Aorta (tissue), 5 donors: ENCODE measurements at regions of chrX and their contacts with region 1.

Region 1: GRCh38 chrX:68828740-68829552 is at the start of gene EFNB1:
- DNase-seq: peak; percentile 94 to 95
- ATAC-seq: peak; percentile 93
- H3K4me3 ChIP-seq: peak within 1 kb of the TSS; percentile 56 to 63
- H3K27ac ChIP-seq: peak within 1 kb of the TSS in 1 of 2 donors; percentile 24
- H3K4me1 ChIP-seq: no peaks in the 10 kb centered on the region
- H3K27me3 ChIP-seq: no peaks in the 10 kb centered on the region
- total RNA-seq, gene EFNB1: 17.0 to 24.0 TPM

Region 2: GRCh38 chrX:68929332-68930150 is 100.6 kb after region 1 on chrX:
- intact Hi-C with region 1: loop called in 1 of 2 experiments (anchors 10 kb)
- DNase-seq: peak in 1 of 2 donors; percentile 62
- ATAC-seq: no peak
- H3K4me3 ChIP-seq: no peak overlapping the region
- H3K27ac ChIP-seq: no peak overlapping the region
- H3K4me1 ChIP-seq: no peaks in the 10 kb centered on the region
- H3K27me3 ChIP-seq: no peaks in the 10 kb centered on the region

Region 3: GRCh38 chrX:69060631-69061408 is 231.9 kb after region 1 on chrX:
- intact Hi-C with region 1: loop called (anchors 2 kb)
- DNase-seq: no peak
- ATAC-seq: peak; percentile 57
- H3K4me3 ChIP-seq: no peak overlapping the region
- H3K27ac ChIP-seq: no peak overlapping the region
- H3K4me1 ChIP-seq: no peaks in the 10 kb centered on the region
- H3K27me3 ChIP-seq: no peaks in the 10 kb centered on the region

Region 4: DNA sequence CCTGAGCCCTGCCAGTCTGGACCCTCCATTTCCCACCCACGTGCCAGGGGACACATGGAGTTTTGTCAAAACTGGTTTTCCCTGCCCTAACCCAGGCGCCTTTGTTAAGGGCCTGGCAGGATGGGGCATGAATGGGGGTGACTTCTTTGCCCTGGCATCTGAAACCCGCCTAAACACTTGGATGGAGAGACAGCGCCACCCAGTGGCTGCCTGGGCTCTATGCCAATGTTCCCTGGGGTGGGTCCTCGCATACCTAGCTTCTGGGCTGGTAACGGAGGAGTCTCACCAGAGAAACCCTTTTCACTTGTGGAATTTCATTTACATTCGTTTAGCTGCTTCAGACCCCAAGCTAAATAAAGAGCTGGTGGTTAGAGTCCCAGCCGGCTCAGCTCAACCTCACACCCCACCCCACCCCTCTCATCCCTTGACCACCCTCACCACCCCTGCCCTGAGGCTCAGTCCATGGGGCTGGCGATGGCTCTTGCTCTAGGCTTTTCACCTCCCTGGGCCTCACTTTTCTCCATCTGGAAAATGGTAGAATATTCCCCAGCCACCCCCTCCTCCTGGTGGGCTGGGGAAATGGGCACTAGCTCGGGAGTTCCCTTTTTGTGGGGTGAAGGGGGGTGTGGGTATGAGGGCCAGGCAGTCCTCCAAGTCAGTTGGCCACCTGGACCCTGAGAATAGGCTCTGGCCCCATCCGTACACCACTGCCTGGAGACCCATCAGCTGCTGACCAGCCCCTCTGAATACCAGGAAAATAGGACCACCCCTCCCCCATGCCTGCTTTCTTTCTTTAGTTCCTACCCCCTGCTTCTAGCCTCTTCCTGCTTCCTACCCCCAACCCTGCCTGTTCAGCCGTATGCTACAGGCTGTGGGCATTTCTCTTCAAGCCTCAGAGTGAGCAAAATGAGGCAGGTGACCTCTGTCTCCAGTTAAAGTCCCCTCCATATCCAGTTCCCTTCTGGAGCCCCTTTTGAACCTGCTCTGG is 393.5 kb after region 1 on chrX:
- intact Hi-C with region 1: loop called (anchors 2 kb)
- DNase-seq: peak; percentile 75 to 89
- ATAC-seq: no peak
- H3K4me3 ChIP-seq: no peak overlapping the region
- H3K27ac ChIP-seq: no peak overlapping the region
- H3K4me1 ChIP-seq: no peaks in the 10 kb centered on the region
- H3K27me3 ChIP-seq: no peaks in the 10 kb centered on the region